T-cell (primary cell): ENCODE measurements at regions of chr19 and their contacts with region 1.

Region 1: GRCh38 chr19:42113641-42114348 is 18.5 kb downstream of the POU2F2 start:
- DNase-seq: no peak
- ATAC-seq: no peak
- H3K4me3 ChIP-seq: no peak overlapping the region
- H3K4me3 Mint-ChIP-seq: no peak overlapping the region
- H3K27ac ChIP-seq: no peak overlapping the region
- H3K27ac Mint-ChIP-seq: peak overlapping the region; percentile 58 to 83
- H3K4me1 ChIP-seq: peaks cover 0 to 1% of the 10 kb centered on the region in 2 experiments
- H3K4me1 Mint-ChIP-seq: peaks cover 9 to 34% (median 19%) of the 10 kb centered on the region in 3 donors
- H3K27me3 ChIP-seq: no peaks in the 10 kb centered on the region
- H3K27me3 Mint-ChIP-seq: no peaks in the 10 kb centered on the region

Region 2: DNA sequence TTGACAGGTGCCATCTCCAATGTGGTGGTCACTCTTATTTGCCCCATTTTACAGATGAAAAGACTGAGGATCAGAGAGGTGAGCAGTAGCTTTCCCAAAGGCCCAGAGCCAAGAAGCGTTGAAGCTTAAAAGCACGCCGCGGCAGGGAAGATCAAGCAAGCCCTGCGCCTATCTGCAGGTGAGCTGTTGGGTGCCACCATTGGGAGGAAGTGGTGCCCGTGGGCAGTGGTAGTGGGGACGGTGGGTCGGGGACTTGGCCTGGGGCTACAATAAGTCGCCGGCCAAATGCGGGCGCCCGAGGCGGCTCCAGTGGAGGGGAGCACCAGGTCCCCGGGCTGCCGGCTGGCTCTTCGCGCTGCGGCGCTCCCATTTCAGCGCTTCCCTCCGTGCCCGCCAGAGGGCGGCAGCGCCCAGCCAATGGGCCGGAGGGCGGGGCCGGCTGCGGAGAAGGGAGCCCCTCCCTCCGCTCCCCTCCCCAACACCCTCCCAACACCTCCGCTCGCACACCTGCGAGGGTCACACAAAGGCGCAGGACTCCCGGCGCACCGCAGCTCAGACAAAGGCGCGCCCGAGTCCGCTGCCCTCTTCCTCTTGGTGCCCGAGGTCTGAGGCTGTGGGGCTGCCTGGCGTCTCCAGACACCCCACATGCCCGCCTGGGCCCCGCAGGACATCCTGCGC is 19.2 kb after region 1 on chr19:
- CTCF ChIA-PET with region 1: interaction called in 1 of 2 experiments, 3 read pairs
- POLR2A ChIA-PET with region 1: interaction called in 1 of 2 experiments, 10 read pairs
- DNase-seq: peak; percentile 57 to 91 (median 76)
- ATAC-seq: peak; percentile 67 to 78 (median 68)
- H3K4me3 ChIP-seq: peak overlapping the region; percentile 61 to 81
- H3K4me3 Mint-ChIP-seq: peak overlapping the region; percentile 72 to 86 (median 84)
- H3K27ac ChIP-seq: peak overlapping the region; percentile 82
- H3K27ac Mint-ChIP-seq: peak overlapping the region; percentile 83 to 90
- H3K4me1 ChIP-seq: peaks cover 21 to 78% of the 10 kb centered on the region in 2 experiments
- H3K4me1 Mint-ChIP-seq: peaks cover 67 to 70% (median 68%) of the 10 kb centered on the region in 3 donors
- H3K27me3 ChIP-seq: no peaks in the 10 kb centered on the region
- H3K27me3 Mint-ChIP-seq: no peaks in the 10 kb centered on the region

Region 3: DNA sequence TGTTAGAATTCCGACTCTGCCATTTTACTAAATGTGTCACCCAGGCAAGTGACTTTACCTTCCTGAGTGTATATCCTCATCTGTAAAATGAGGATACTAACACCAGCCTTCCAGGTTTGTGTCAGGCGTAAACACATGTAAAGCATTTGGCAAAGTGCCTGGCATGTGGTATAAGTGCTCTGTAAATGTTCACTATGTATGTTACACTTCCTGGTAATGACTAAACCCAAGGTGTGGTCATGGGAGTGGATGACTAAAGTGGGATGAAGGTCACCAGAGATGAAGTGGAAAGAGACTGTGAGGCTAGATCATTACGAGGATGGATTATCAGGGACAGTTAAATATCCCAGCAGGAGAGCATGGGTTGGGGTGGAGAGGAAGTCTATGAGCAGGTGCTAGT is 78.1 kb after region 1 on chr19:
- CTCF ChIA-PET with region 1: no interaction called
- POLR2A ChIA-PET with region 1: no interaction called
- DNase-seq: no peak
- ATAC-seq: peak in 3 of 4 experiments; percentile 50 to 67 (median 56)
- H3K4me3 ChIP-seq: no peak overlapping the region
- H3K4me3 Mint-ChIP-seq: no peak overlapping the region
- H3K27ac ChIP-seq: no peak overlapping the region
- H3K27ac Mint-ChIP-seq: peak overlapping the region in 1 of 2 donors; percentile 74
- H3K4me1 ChIP-seq: peaks cover 9 to 39% of the 10 kb centered on the region in 2 experiments
- H3K4me1 Mint-ChIP-seq: peaks cover 47 to 68% (median 59%) of the 10 kb centered on the region in 3 donors
- H3K27me3 ChIP-seq: no peaks in the 10 kb centered on the region
- H3K27me3 Mint-ChIP-seq: no peaks in the 10 kb centered on the region